ENCODE measurements at regions of chr20 and their contacts with region 1.

Region 1: GRCh38 chr20:22453239-22454080 is 130.9 kb downstream of the FOXA2 start:
- DNase-seq: no peak
- ATAC-seq: no peak
- H3K4me3 Mint-ChIP-seq: no peak overlapping the region
- H3K27ac Mint-ChIP-seq: no peak overlapping the region
- H3K4me1 Mint-ChIP-seq: peaks cover 16% of the 10 kb centered on the region
- H3K27me3 Mint-ChIP-seq: peaks cover 89% of the 10 kb centered on the region
- CTCF ChIP-seq: peak; percentile 51

Region 2: GRCh38 chr20:22403632-22404361 is 49.7 kb before region 1 on chr20:
- CTCF ChIA-PET with region 1: interaction called, 14 read pairs
- POLR2A ChIA-PET with region 1: no interaction called
- DNase-seq: no peak
- ATAC-seq: peak; percentile 15; the same call in 1 of the 2 replicates
- H3K4me3 Mint-ChIP-seq: peak overlapping the region; percentile 54
- H3K27ac Mint-ChIP-seq: no peak overlapping the region
- H3K4me1 Mint-ChIP-seq: peaks cover 25% of the 10 kb centered on the region
- H3K27me3 Mint-ChIP-seq: peaks cover 33% of the 10 kb centered on the region
- CTCF ChIP-seq: no peak

Region 3: DNA sequence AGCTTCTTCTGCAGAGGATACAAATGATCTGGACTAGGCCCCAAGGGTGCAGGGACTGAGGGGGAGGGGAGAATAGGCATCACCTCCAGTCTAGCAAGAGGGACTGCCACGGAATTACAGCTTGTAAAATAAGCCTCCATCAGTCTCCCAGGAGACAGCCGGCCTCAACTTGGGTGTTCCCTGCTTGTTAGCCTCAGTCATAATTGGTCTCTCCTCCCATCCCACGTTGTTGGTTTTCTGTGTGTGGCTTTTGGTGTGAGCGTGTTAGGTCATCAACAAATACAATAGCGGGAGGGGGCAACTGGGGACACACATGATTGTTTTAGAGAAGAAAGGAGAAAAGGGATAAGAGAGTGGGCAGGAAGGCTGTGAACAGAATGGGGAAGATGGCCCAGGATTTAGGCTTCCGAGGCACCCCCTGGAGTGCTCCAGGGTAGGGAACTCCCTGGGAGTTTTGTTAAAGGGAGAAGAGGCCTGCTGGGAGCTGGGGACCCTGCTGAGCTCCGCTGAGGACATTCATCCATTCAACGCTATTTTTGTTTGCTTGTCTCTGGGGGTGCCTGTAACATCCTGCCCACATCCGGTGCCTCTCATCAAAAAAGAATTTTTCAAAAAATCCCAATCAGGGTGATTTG is 121.7 kb after region 1 on chr20:
- CTCF ChIA-PET with region 1: interaction called, 10 read pairs
- POLR2A ChIA-PET with region 1: no interaction called
- DNase-seq: no peak
- ATAC-seq: no peak
- H3K4me3 Mint-ChIP-seq: no peak overlapping the region
- H3K27ac Mint-ChIP-seq: no peak overlapping the region
- H3K4me1 Mint-ChIP-seq: peaks cover 76% of the 10 kb centered on the region
- H3K27me3 Mint-ChIP-seq: peaks cover 100% of the 10 kb centered on the region
- CTCF ChIP-seq: no peak

Measured in WTC11 (cell line).